Cardiac septum (tissue), 1 donor: ENCODE measurements at regions of chr16 and their contacts with region 1.

Region 1: GRCh38 chr16:17578921-17579874 is 108.4 kb upstream of the XYLT1 start:
- DNase-seq: no peak

Region 2: GRCh38 chr16:16861546-16861945 is 717.7 kb before region 1 on chr16:
- intact Hi-C with region 1: loop called (anchors 10 kb)
- DNase-seq: no peak